Activated naive CD4-positive, alpha-beta T cell treated with anti-CD3 and anti-CD28 coated beads for 36 hours (primary cell): ENCODE measurements at regions of chr7 and their contacts with region 1.

Region 1: DNA sequence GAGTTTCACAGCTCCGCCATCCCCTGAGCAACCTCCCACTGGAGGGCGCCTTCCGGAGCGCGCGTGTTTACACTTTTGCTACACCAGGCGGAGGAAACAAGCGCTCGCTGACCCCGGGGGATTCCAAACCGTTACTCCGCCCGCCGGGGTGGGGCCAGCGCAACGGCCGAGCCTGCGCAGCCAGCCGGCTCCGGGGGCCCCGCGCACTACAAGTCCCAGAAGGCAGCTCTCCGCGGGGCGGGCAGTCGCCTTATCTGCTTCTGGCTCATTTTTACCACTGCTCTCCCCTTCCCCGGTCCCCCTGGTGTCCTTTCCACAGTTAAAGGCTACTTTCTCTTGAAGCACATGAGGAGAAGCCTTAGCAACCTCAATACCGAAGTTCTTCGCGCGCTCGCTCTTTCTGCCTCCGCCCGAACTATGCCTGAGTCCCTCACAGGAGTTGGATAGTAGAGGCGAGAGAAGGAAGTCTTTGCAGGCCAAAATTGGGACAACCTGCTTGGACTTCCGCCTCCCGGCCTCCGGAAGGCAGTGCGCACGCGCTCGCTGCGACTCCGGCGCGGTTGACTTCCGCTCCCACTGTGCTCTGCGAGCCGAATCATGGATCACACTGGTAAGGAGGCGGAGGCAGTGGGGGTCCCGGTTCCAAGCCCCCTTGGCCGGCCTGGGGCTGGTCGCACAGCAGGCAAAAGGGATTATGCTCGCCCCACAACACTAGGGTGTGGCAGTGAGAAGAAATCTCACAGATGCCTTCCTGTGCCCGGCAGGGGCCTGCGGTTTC is at the start of gene CBLL1:
- DNase-seq: peak; percentile 98
- H3K4me3 Mint-ChIP-seq: peak within 1 kb of the TSS; percentile 96
- H3K27ac Mint-ChIP-seq: peak within 1 kb of the TSS; percentile 100
- H3K4me1 Mint-ChIP-seq: peaks cover 42% of the 10 kb centered on the region
- H3K27me3 Mint-ChIP-seq: no peaks in the 10 kb centered on the region
- total RNA-seq, gene CBLL1: 31.6 to 32.1 TPM

Region 2: DNA sequence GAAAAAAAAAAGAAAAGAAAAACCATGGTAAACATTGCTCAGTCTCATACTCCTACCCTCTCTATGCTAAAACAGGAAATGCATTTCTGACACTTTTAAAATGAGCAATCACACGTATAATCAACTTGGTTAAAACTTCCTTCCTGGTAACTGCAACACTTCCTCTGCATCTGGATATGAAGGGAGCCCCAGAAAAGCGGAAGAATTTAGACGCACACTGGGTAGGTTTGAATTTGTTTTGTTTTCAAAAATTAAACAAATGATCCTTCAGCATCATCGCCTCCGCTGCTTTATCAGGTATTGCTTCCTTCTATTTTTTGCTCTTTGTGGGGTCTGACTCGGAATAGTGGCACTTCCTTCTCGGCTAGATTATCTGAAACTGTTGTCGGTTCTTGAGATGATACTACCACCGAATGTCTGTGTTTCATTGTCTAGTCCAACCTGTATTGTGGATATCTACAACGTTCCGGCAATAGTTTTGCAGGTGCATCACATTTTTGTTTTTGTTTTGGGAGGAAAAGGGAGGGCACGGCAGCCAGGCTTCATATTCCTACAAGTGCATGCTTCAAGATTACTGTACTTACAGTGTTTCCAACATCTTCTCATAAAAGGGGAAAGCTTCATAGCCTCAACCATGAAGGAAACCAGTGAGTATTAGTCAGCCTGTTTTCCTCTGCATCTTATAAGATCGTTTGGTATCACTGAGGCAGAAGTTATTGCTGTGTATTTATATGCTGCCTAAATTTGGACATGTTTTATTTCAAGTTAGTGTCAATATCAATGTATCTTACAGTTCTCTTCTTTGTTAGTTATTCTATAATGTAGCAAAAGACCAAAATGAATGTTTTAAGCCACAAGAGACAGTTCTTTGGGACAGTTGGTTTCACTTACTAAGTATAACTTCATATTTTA is 878.4 kb before region 1 on chr7 and contains the start of gene PIK3CG:
- CTCF ChIA-PET with region 1: no interaction called
- intact Hi-C with region 1: loop called (anchors 5 kb)
- DNase-seq: no peak
- H3K4me3 Mint-ChIP-seq: peak within 1 kb of the TSS; percentile 79
- H3K27ac Mint-ChIP-seq: peak within 1 kb of the TSS; percentile 65
- H3K4me1 Mint-ChIP-seq: peaks cover 77% of the 10 kb centered on the region
- H3K27me3 Mint-ChIP-seq: no peaks in the 10 kb centered on the region
- total RNA-seq, gene PIK3CG: 3.6 to 3.8 TPM

Region 3: GRCh38 chr7:107563775-107564552 is 179.8 kb before region 1 on chr7 and contains the starts of genes COG5 and DUS4L:
- CTCF ChIA-PET with region 1: interaction called, 4 read pairs
- intact Hi-C with region 1: loop called (anchors 1 kb)
- DNase-seq: peak; percentile 87
- H3K4me3 Mint-ChIP-seq: peak within 1 kb of the TSS; percentile 82
- H3K27ac Mint-ChIP-seq: peak within 1 kb of the TSS; percentile 92
- H3K4me1 Mint-ChIP-seq: peaks cover 61% of the 10 kb centered on the region
- H3K27me3 Mint-ChIP-seq: no peaks in the 10 kb centered on the region
- total RNA-seq, gene COG5: 52.0 to 62.8 TPM
- total RNA-seq, gene DUS4L: 10.8 to 12.3 TPM

Region 4: DNA sequence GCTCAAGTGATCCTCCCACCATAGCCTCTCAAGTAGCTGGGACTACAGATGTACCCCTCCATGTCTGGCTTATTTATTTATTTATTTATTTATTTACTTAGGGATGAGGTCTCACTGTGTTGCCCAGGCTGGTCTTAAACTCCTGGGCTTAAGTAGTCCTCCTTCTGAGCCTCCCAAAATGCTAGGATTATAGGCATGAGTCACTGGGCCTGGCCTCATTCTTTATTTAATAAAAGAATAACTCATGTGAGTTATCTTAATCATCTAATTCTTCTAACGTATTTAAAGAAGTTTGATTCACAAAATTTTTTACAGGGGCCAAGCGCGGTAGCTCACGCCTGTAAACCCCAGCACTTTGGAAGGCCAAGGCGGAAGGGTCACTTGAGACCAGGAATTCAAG is 91.1 kb before region 1 on chr7:
- CTCF ChIA-PET with region 1: no interaction called
- intact Hi-C with region 1: no loop called
- DNase-seq: no peak
- H3K4me3 Mint-ChIP-seq: no peak overlapping the region
- H3K27ac Mint-ChIP-seq: no peak overlapping the region
- H3K4me1 Mint-ChIP-seq: peaks cover 6% of the 10 kb centered on the region
- H3K27me3 Mint-ChIP-seq: peaks cover 27% of the 10 kb centered on the region

Region 5: GRCh38 chr7:107816011-107816566 is 72.3 kb after region 1 on chr7:
- CTCF ChIA-PET with region 1: interaction called, 3 read pairs
- intact Hi-C with region 1: loop called (anchors 1 kb)
- DNase-seq: no peak
- H3K4me3 Mint-ChIP-seq: no peak overlapping the region
- H3K27ac Mint-ChIP-seq: peak overlapping the region; percentile 1
- H3K4me1 Mint-ChIP-seq: peaks cover 32% of the 10 kb centered on the region
- H3K27me3 Mint-ChIP-seq: peaks cover 2% of the 10 kb centered on the region

Region 6: GRCh38 chr7:108525985-108526767 is 782.4 kb after region 1 on chr7 and contains the start of gene PNPLA8:
- CTCF ChIA-PET with region 1: no interaction called
- intact Hi-C with region 1: loop called (anchors 1 kb)
- DNase-seq: peak; percentile 100
- H3K4me3 Mint-ChIP-seq: peak within 1 kb of the TSS; percentile 92
- H3K27ac Mint-ChIP-seq: peak within 1 kb of the TSS; percentile 97
- H3K4me1 Mint-ChIP-seq: peaks cover 36% of the 10 kb centered on the region
- H3K27me3 Mint-ChIP-seq: no peaks in the 10 kb centered on the region
- total RNA-seq, gene PNPLA8: 18.8 to 18.9 TPM